IMR-90 (cell line): ENCODE measurements at regions of chr13 and their contacts with region 1.

Region 1: DNA sequence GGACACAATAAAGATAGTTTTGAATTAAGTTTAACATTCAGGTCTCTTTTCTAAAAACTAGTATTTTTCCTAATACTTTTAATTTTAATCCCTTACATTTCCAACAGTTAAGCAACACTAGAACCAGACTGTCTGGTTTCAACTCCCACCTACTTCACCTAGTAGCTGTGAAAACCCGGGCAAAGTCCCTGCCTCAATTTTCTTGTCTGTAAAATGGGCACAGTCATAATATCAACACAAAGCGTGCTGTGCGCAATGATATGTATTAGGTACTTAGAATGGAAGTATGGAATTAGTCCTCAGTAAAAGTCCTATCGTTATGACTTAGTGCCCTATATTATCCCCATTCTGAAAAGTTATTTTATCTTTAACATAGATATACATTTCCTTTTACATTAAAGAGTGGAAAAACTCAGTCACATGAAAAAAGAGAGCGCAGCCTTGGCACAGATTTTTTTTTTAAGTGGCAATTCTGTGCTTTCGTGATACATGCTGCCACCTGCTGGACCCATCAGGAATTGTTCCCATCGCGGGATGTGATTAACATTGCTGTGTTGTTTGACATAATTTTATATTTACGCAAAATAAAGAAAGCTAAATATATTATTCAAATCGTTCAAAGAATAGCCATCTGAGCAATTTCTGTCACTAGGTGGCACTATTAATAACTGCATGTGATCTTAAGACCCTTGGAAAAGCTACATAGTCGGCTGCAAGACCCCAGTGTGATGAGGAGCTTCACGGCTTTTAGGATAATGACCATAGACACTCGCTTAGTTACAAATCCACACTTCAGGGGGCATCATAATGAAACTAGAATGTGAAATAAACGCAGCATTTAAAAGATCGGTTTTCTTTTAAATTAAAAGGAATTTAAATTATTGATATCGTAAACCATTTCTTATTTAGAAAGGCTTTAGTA is 59.9 kb downstream of the LIG4 start:
- DNase-seq: peak; percentile 52
- ATAC-seq: peak; percentile 65; the same call in 1 of the 2 replicates
- H3K4me3 ChIP-seq: no peak overlapping the region
- H3K27ac ChIP-seq: no peak overlapping the region
- H3K4me1 ChIP-seq: no peaks in the 10 kb centered on the region
- H3K27me3 ChIP-seq: peaks cover 2% of the 10 kb centered on the region
- CTCF ChIP-seq: peak; percentile 85
- POLR2A ChIP-seq: no peak
- RAD21 ChIP-seq: peak; percentile 78

Region 2: GRCh38 chr13:107842562-107843180 is 312.8 kb before region 1 on chr13:
- CTCF ChIA-PET with region 1: no interaction called
- POLR2A ChIA-PET with region 1: no interaction called
- dilution Hi-C with region 1: no loop called
- in situ Hi-C with region 1: no loop called
- intact Hi-C with region 1: no loop called
- DNase-seq: peak; percentile 58
- ATAC-seq: peak; percentile 25; the same call in 1 of the 2 replicates
- H3K4me3 ChIP-seq: no peak overlapping the region
- H3K27ac ChIP-seq: no peak overlapping the region
- H3K4me1 ChIP-seq: peaks cover 10% of the 10 kb centered on the region
- H3K27me3 ChIP-seq: no peaks in the 10 kb centered on the region
- CTCF ChIP-seq: no peak
- POLR2A ChIP-seq: no peak
- RAD21 ChIP-seq: no peak

Region 3: DNA sequence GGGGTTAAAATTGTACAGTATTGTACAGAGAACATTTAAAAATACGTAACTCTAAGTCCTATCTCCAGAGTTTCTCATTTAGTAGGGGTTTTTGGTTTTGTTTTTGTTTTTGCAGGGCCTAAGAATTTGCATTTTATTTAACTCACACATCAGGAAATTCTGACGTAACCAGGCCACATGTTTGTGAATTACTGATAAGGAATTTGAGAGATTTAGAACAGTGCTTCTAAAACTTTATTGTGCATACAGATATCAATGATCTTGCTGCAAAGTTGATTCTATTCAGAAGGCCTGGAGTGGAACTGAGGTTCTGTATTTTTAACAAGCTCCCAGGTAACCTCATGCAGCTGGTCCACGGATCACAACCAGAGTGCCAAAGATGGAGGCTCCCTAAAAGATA is 10.6 kb after region 1 on chr13:
- CTCF ChIA-PET with region 1: interaction called, 14 read pairs
- POLR2A ChIA-PET with region 1: no interaction called
- dilution Hi-C with region 1: no loop called
- in situ Hi-C with region 1: no loop called
- intact Hi-C with region 1: no loop called
- DNase-seq: peak; percentile 47
- ATAC-seq: peak; percentile 40
- H3K4me3 ChIP-seq: no peak overlapping the region
- H3K27ac ChIP-seq: no peak overlapping the region
- H3K4me1 ChIP-seq: peaks cover 2% of the 10 kb centered on the region; the same call in 1 of the 2 replicates
- H3K27me3 ChIP-seq: peaks cover 2% of the 10 kb centered on the region; the same call in 1 of the 2 replicates
- CTCF ChIP-seq: no peak
- POLR2A ChIP-seq: no peak
- RAD21 ChIP-seq: no peak

Region 4: DNA sequence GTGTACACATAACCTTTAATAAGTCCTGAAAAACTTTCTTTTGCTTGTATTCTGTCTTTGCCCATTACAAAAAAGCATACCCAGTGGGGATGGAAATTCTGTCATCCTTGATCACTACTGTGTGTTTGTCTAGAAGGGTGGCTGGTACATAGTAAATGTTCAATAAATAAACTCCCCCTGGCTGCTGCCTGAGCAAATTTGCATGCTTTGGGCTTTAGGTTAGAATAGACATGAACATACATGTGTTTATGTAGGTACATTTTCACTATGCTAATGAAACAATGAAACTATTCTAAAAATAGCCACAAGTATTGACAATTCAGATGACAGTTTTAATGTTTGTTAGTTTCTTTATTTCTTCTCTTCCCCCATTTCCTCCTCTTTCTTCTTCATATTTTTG is 150.2 kb after region 1 on chr13:
- CTCF ChIA-PET with region 1: no interaction called
- POLR2A ChIA-PET with region 1: no interaction called
- dilution Hi-C with region 1: no loop called
- in situ Hi-C with region 1: no loop called
- intact Hi-C with region 1: no loop called
- DNase-seq: no peak
- ATAC-seq: no peak
- H3K4me3 ChIP-seq: no peak overlapping the region
- H3K27ac ChIP-seq: no peak overlapping the region
- H3K4me1 ChIP-seq: no peaks in the 10 kb centered on the region
- H3K27me3 ChIP-seq: no peaks in the 10 kb centered on the region
- CTCF ChIP-seq: no peak
- POLR2A ChIP-seq: no peak
- RAD21 ChIP-seq: no peak

Region 5: GRCh38 chr13:108407495-108407894 is 252.0 kb after region 1 on chr13:
- CTCF ChIA-PET with region 1: no interaction called
- POLR2A ChIA-PET with region 1: no interaction called
- dilution Hi-C with region 1: no loop called
- in situ Hi-C with region 1: no loop called
- intact Hi-C with region 1: no loop called
- DNase-seq: no peak
- ATAC-seq: no peak
- H3K4me3 ChIP-seq: no peak overlapping the region
- H3K27ac ChIP-seq: no peak overlapping the region
- H3K4me1 ChIP-seq: no peaks in the 10 kb centered on the region
- H3K27me3 ChIP-seq: no peaks in the 10 kb centered on the region
- CTCF ChIP-seq: no peak
- POLR2A ChIP-seq: no peak
- RAD21 ChIP-seq: no peak

Region 6: GRCh38 chr13:108527844-108528243 is 372.4 kb after region 1 on chr13:
- CTCF ChIA-PET with region 1: no interaction called
- POLR2A ChIA-PET with region 1: no interaction called
- dilution Hi-C with region 1: no loop called
- in situ Hi-C with region 1: no loop called
- intact Hi-C with region 1: no loop called
- DNase-seq: no peak
- ATAC-seq: no peak
- H3K4me3 ChIP-seq: no peak overlapping the region
- H3K27ac ChIP-seq: no peak overlapping the region
- H3K4me1 ChIP-seq: no peaks in the 10 kb centered on the region
- H3K27me3 ChIP-seq: no peaks in the 10 kb centered on the region
- CTCF ChIP-seq: no peak
- POLR2A ChIP-seq: no peak
- RAD21 ChIP-seq: no peak